Calu3 (cell line): ENCODE measurements at regions of chr1 and their contacts with region 1.

Region 1: GRCh38 chr1:164660412-164660772 is 101.4 kb downstream of the PBX1 start:
- DNase-seq: peak; percentile 49
- H3K4me3 Mint-ChIP-seq: peak overlapping the region; percentile 50
- H3K27ac Mint-ChIP-seq: peak overlapping the region; percentile 88
- H3K4me1 Mint-ChIP-seq: peaks cover 64% of the 10 kb centered on the region
- H3K27me3 Mint-ChIP-seq: no peaks in the 10 kb centered on the region
- CTCF ChIP-seq: no peak

Region 2: DNA sequence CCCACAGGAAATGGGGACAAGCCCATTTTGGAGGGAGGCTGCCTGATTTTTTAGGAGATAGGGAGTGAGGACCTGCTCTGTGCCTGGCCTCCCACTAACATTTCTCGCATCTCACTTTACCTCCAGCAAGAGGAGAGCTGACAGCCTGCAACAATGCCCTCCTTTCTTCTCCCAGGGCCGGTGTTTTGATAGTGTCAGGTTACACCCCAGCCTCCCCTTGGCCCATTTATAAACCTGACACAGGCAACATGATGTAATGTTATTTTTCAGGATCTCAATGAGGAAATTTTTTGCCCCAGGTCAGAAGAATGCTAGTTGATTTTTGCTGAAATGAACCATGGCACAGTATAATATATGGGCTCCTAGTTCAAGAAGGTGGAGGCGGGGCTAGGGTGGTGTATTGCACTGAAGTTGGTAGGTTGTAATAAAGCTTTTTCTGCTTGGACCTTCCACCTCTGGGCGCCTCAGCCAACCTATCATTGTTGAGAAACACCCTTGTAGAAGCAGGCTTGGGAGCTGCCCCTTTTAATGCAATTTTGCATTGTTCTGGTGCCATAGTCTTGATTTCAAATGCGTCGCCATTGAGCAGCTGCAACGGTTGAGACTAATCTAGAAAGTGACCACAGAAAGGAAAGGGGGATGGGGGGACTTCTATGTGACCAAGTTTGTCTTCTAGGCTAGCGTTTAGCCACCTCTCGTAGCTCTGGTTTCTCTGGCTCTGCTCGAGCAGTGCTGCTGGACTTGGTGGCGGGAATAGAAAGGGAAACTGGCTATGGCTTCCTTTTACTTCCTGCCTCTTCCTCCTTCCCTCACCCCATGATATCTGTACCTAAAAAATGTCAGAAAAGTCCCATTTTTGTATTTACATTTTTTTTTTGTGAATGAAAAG is 48.4 kb before region 1 on chr1:
- CTCF ChIA-PET with region 1: interaction called, 11 read pairs
- intact Hi-C with region 1: loop called (anchors 2 kb)
- DNase-seq: peak; percentile 88
- H3K4me3 Mint-ChIP-seq: peak overlapping the region; percentile 48
- H3K27ac Mint-ChIP-seq: peak overlapping the region; percentile 31
- H3K4me1 Mint-ChIP-seq: peaks cover 49% of the 10 kb centered on the region
- H3K27me3 Mint-ChIP-seq: no peaks in the 10 kb centered on the region
- CTCF ChIP-seq: no peak

Region 3: GRCh38 chr1:164643018-164643417 is 17.4 kb before region 1 on chr1:
- CTCF ChIA-PET with region 1: no interaction called
- intact Hi-C with region 1: no loop called
- DNase-seq: no peak
- H3K4me3 Mint-ChIP-seq: no peak overlapping the region
- H3K27ac Mint-ChIP-seq: no peak overlapping the region
- H3K4me1 Mint-ChIP-seq: peaks cover 43% of the 10 kb centered on the region
- H3K27me3 Mint-ChIP-seq: no peaks in the 10 kb centered on the region
- CTCF ChIP-seq: no peak

Region 4: DNA sequence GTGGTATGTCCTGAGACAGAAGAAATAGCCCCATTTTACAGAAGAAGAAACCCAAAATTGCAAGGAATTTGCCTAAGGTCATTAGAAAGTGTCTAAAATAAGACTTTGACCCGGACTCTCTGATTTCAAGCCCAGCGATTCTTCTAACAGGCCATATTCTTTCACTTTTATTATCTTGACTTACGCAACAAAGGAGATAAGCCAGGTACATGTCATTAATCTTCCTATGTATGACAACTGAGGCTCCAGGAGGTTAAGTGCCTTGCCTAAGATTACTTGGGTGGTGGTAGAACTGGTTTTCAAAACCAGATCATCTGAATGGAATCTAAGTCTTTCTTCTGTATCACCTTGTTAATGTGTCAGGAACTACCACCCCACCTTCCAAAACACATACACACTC is 22.8 kb after region 1 on chr1:
- CTCF ChIA-PET with region 1: interaction called, 4 read pairs
- intact Hi-C with region 1: loop called (anchors 2 kb)
- DNase-seq: peak; percentile 49
- H3K4me3 Mint-ChIP-seq: peak overlapping the region; percentile 52
- H3K27ac Mint-ChIP-seq: peak overlapping the region; percentile 90
- H3K4me1 Mint-ChIP-seq: peaks cover 27% of the 10 kb centered on the region
- H3K27me3 Mint-ChIP-seq: no peaks in the 10 kb centered on the region
- CTCF ChIP-seq: no peak

Region 5: GRCh38 chr1:164772635-164773034 is 112.2 kb after region 1 on chr1:
- CTCF ChIA-PET with region 1: interaction called, 5 read pairs
- intact Hi-C with region 1: loop called (anchors 5 kb)
- DNase-seq: peak; percentile 74
- H3K4me3 Mint-ChIP-seq: no peak overlapping the region
- H3K27ac Mint-ChIP-seq: peak overlapping the region; percentile 26
- H3K4me1 Mint-ChIP-seq: peaks cover 90% of the 10 kb centered on the region
- H3K27me3 Mint-ChIP-seq: no peaks in the 10 kb centered on the region
- CTCF ChIP-seq: no peak

Region 6: DNA sequence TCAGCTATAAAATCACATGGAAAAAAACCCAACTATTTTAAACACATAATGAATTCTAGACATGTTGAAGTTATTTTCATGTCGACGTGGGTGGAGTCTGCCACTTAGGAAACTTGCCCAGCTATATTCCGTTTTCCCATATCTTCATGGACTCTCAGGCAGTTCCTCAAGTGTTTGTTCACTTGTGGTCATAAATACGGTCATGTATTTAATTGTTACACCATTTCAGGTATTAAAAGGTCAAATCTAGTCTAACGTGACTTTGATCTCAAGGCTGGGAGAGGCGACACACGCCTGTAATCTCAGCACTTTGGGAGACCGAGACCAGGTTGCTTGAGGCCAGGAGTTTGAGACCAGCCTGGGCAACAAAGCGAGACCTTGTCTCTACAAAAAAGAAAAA is 245.5 kb after region 1 on chr1:
- CTCF ChIA-PET with region 1: no interaction called
- intact Hi-C with region 1: no loop called
- DNase-seq: no peak
- H3K4me3 Mint-ChIP-seq: no peak overlapping the region
- H3K27ac Mint-ChIP-seq: no peak overlapping the region
- H3K4me1 Mint-ChIP-seq: no peaks in the 10 kb centered on the region
- H3K27me3 Mint-ChIP-seq: no peaks in the 10 kb centered on the region
- CTCF ChIP-seq: no peak